GM18951 (cell line): ENCODE measurements at regions of chr15 and their contacts with region 1.

Region 1: DNA sequence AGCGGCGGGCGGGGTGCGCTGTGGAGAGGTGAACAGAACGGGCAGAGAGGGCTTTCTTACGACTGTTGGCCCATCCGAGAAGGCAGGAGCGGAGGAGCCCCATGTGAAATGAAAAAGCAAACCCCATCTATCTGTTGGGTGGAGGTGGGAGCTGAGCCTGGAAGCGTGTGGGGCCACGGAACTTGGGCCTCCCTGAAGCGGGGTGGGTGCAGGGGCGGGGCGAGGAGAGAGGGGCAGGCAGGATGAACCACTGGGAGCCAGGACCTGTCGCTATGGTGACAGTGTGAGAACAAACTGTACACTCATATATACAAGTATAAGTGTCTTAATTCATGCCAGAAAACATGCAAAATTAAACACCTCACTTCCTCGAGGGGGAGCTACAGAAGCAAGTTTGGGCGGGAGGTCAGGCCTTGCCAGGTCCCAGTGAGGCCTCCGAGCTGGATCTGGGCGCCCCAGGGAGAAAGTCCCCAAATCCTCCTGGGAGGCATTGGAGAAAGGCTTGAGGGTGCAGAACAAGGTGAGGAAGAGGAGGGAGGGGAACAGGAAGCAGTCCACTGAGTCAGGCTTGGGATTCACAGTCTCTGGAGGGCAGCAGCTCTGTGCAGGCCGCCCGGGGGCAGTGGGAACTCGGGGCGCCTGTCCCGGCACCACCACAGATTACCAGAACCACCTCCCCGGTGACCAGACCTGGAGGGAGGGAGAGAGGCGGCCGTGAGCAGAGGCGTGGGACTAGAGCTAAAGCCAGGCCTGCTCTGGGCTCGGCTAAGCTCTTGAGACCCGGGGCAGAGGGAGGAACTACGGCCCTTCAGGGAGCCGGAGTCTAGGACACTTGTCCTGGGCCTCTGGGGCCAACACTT is 34.8 kb downstream of the RBPMS2 start:
- POLR2A ChIP-seq: no peak

Region 2: DNA sequence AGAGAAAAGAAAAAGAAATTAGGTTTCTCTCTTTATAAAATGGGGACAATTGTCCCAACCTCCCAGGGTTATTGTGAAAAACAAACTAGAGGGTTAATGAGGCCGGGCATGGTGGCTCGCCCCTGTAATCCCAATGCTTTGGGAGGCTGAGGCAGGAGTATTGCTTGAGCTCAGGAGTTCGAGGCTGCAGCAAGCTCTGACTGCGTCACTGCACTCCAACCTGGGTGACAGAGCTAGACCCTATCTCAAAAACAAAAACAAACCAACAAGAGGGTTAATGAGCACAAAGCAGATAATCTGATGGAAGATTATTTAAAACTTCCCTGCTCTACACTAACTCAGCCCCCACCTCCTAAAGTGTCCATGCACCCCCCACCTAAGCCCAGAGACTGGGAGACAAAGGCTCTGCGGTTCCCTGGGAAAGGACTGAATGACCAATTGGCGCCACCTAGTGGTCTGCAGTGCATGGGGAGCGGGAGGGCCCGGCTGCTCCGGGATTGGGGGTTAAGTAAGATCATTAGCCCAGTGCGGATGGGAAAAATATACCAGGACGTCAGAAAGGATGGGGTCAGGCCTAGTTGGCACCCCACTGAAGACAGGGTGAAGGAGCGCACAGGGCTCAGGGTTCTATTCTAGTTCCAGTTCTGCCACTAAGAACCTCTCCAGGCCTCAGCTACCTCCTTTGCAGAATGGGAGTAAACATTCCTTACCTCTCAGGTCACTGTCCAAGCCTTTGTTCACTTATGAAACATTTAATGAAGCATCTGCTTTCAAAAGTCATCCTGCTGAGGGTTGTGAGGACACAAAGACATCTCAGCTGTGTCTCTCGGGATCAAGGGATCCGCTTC is 69.3 kb after region 1 on chr15:
- in situ Hi-C with region 1: loop called (anchors 10 kb)
- POLR2A ChIP-seq: no peak

Region 3: DNA sequence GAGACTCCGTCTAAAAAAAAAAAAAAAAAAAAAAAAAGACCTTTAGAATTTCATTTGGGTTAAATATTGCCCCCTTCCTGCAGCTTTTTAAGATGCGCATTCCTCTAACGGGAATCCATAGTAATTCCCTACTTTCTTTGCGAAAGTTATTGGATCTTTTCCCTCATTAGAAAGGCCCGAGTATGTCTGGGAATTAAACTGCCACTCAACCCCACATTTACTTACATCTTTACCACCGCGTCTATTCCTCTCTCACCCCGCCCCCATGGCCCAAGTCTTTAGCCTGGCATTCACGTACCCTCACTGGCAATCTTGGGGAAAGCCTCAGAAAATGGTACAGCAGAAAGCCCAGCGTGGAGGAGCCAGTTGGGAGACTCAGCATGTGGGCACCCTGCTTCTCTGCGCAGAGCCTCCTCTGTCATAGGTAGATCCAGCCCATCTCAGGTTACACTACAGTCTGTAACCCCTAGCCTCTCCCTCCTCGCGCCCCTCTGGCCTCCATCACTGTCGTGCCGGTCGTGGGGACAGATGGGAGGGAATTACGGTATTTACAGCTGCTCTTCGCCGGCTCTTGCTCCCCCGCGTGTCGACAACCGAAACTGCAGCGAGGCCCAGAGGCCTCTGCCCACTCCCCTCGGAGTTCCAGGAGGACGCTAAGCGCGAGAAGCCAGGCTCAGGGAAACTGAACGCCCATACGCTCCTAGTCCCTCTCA is 164.7 kb after region 1 on chr15:
- in situ Hi-C with region 1: loop called (anchors 10 kb)
- POLR2A ChIP-seq: no peak